ENCODE measurements at regions of chr16 and their contacts with region 1.

Region 1: DNA sequence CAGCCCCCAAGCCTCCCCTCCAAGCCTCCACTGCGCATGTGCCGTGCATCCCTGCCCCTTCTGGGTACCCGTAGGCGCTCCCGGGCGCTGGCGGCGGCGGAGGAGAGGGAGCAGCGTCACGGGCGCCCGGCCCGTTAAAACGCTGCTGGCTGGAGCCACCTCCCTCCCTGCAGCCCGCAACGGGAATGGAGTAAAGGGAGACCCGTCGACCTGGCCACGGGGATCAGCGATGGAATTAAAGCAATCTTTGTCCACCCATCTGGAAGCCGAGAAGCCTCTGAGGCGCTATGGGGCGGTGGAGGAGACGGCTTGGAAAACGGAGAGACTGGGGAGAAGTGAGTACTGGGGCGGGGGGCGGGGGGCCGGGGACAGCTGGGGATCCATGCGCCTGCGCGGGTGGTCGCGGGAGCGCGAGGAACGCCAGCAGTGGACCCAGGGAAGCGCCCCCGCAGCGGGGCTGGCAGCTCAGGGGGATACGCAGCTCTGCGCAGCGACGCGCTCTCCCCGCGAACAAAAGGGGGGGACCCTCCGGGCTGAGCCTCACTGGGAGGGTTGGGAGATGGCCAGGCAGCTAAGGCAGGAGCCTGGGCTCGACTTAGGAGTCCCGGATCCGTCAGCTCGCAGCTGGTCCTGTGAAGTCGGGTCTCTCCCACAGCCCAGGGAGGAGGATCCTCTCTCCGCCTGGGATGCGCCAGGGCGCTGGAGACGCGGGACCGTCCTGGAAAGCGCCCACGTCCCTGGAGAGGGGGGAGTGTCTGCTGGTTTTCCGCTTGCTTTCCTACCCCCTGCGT is at the start of gene BMERB1:
- DNase-seq: peak; percentile 71
- ATAC-seq: peak; percentile 95
- H3K4me3 ChIP-seq: peak within 1 kb of the TSS; percentile 71
- H3K27ac ChIP-seq: peak within 1 kb of the TSS; percentile 92
- H3K4me1 ChIP-seq: peaks cover 7% of the 10 kb centered on the region
- H3K27me3 ChIP-seq: no peaks in the 10 kb centered on the region
- CTCF ChIP-seq: no peak
- POLR2A ChIP-seq: peak; percentile 59
- RAD21 ChIP-seq: peak; percentile 21; the same call in 1 of the 2 replicates
- total RNA-seq, gene BMERB1: 22.5 and 22.6 TPM in 2 replicates

Region 2: GRCh38 chr16:15502041-15502725 is 67.6 kb after region 1 on chr16:
- CTCF ChIA-PET with region 1: no interaction called
- POLR2A ChIA-PET with region 1: no interaction called
- dilution Hi-C with region 1: no loop called
- in situ Hi-C with region 1: loop called (anchors 10 kb)
- intact Hi-C with region 1: loop called (anchors 5 kb)
- DNase-seq: peak; percentile 96
- ATAC-seq: peak; percentile 91
- H3K4me3 ChIP-seq: no peak overlapping the region
- H3K27ac ChIP-seq: peak overlapping the region; percentile 89
- H3K4me1 ChIP-seq: peaks cover 12% of the 10 kb centered on the region
- H3K27me3 ChIP-seq: no peaks in the 10 kb centered on the region
- CTCF ChIP-seq: no peak
- POLR2A ChIP-seq: no peak
- RAD21 ChIP-seq: 0 out of 2 replicates have a peak, but pooled peaks have one; percentile 11

Region 3: DNA sequence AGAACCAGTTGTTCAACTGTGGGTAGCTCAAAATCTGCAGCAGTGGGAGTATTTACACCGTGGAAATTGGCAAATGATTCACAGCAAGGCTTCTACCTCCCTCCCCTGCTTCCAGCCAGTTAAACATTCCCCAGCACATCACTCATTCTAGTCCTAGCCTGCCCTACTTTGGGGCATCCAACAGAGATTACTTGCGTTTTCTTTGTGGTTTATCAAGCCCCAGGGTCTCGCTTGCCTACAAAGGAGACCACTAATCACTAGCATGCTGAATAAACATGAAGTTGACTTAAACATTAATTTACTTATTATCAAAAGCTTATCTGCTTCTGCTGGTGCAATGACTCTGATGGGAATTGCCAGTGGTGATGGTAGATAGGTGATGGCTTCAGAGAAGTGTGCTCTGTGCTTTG is 113.9 kb after region 1 on chr16:
- CTCF ChIA-PET with region 1: no interaction called
- POLR2A ChIA-PET with region 1: no interaction called
- dilution Hi-C with region 1: no loop called
- in situ Hi-C with region 1: loop called (anchors 10 kb)
- intact Hi-C with region 1: loop called (anchors 2 kb)
- DNase-seq: peak; percentile 16
- ATAC-seq: 0 out of 2 replicates have a peak, but pooled peaks have one; percentile 30
- H3K4me3 ChIP-seq: no peak overlapping the region
- H3K27ac ChIP-seq: no peak overlapping the region
- H3K4me1 ChIP-seq: 0 out of 2 replicates have a peak, but pooled peaks cover 1% of the 10 kb centered on the region
- H3K27me3 ChIP-seq: no peaks in the 10 kb centered on the region
- CTCF ChIP-seq: no peak
- POLR2A ChIP-seq: no peak
- RAD21 ChIP-seq: no peak

Region 4: DNA sequence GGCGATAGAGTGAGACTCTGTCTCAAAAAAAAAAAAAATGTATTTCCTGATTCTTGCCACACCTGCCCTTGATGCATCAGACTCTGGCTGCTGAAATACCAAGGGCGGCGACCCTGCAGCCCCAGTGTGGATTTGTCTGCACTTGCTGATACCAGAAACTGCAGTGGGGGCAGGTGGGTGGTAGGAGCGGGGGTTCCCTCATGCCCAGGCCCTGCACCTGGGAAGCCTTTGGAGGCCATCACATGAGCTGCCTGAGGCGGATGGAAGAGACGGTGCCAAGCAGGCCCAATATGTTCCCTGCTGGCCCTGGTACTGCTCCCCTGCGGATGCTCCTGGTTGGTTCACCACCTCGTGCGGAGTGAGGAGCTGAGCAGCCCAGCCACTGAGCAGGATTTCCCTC is 157.7 kb after region 1 on chr16:
- CTCF ChIA-PET with region 1: interaction called, 3 read pairs
- POLR2A ChIA-PET with region 1: no interaction called
- dilution Hi-C with region 1: no loop called
- in situ Hi-C with region 1: no loop called
- intact Hi-C with region 1: loop called (anchors 2 kb)
- DNase-seq: no peak
- ATAC-seq: no peak
- H3K4me3 ChIP-seq: no peak overlapping the region
- H3K27ac ChIP-seq: no peak overlapping the region
- H3K4me1 ChIP-seq: peaks cover 2% of the 10 kb centered on the region; the same call in 1 of the 2 replicates
- H3K27me3 ChIP-seq: no peaks in the 10 kb centered on the region
- CTCF ChIP-seq: no peak
- POLR2A ChIP-seq: no peak
- RAD21 ChIP-seq: no peak